ENCODE measurements at regions of chr1 and their contacts with region 1.

Region 1: DNA sequence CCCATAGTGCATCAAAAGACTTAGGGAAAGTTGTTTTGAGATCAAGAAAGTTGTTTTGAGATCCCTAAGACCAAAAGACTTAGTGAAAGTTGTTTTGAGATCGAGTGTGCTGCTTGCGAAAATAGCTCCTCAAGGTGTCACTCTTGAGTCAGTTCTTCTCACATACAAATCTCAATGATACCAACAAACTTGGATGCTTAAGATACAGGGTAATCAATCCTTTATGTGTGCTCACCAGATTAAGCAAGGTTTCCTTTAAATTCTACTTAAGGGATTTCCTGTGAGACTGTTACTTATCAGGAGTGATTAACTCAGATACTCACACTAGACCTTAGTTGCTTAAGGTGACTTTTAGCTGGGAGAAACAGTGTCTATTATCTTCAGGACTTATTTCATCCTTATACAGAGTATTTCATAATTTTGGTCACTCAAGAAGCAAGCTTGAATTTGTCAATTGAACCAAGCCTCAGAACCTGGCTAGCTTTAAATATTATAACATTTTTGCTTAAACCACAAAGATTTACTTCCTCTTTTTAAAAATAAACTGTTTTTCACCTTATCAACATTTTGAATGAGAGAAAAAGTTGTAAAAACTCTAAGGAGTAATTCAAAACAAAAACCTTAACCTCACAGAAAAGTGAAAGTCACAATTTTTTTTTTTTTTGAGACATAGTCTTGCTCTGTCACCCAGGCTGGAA is 8.0 kb upstream of the RLF start:
- DNase-seq: peak; percentile 61
- H3K4me3 Mint-ChIP-seq: no peak overlapping the region
- H3K27ac Mint-ChIP-seq: no peak overlapping the region
- H3K4me1 Mint-ChIP-seq: peaks cover 8% of the 10 kb centered on the region
- H3K27me3 Mint-ChIP-seq: peaks cover 13% of the 10 kb centered on the region
- CTCF ChIP-seq: peak; percentile 57

Region 2: GRCh38 chr1:39917825-39918224 is 235.4 kb before region 1 on chr1:
- CTCF ChIA-PET with region 1: no interaction called
- POLR2A ChIA-PET with region 1: no interaction called
- intact Hi-C with region 1: no loop called
- DNase-seq: no peak
- H3K4me3 Mint-ChIP-seq: no peak overlapping the region
- H3K27ac Mint-ChIP-seq: no peak overlapping the region
- H3K4me1 Mint-ChIP-seq: no peaks in the 10 kb centered on the region
- H3K27me3 Mint-ChIP-seq: no peaks in the 10 kb centered on the region
- CTCF ChIP-seq: no peak

Region 3: GRCh38 chr1:40078512-40079333 is 74.5 kb before region 1 on chr1:
- CTCF ChIA-PET with region 1: interaction called, 10 read pairs
- POLR2A ChIA-PET with region 1: no interaction called
- intact Hi-C with region 1: loop called (anchors 10 kb)
- DNase-seq: peak; percentile 79
- H3K4me3 Mint-ChIP-seq: no peak overlapping the region
- H3K27ac Mint-ChIP-seq: no peak overlapping the region
- H3K4me1 Mint-ChIP-seq: peaks cover 13% of the 10 kb centered on the region
- H3K27me3 Mint-ChIP-seq: no peaks in the 10 kb centered on the region
- CTCF ChIP-seq: peak; percentile 65

Region 4: DNA sequence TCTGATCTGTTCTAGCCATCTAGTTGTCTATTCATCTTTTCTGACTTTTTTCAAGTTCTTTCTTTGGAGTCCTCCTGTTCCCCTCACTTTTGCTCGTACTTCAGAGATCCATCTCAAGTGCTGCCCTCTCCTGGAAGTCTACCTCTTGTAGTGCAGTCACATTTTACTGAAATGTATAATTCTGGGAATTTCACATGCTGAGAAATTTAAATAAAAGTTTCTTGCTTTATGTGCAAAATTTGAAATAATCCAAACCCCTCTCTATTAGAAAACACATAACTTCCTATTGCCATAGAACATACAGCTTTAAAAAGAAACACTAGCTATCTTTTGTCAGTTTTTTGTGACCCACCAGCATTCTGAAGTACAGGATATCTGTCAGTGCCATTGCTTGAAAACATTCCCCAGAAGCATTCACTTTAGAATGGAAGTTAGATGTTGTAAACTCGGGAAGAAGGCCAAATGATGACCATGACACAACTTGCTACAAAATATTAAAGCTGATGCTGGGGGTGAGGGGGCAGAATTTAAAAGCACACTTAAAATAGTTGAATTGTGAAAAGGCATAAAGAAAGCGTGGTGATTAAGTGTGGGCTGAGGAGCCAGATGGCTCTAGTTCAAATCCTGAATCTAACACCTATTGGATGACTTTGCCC is 30.0 kb after region 1 on chr1:
- CTCF ChIA-PET with region 1: interaction called, 20 read pairs
- POLR2A ChIA-PET with region 1: no interaction called
- intact Hi-C with region 1: no loop called
- DNase-seq: peak; percentile 28
- H3K4me3 Mint-ChIP-seq: no peak overlapping the region
- H3K27ac Mint-ChIP-seq: no peak overlapping the region
- H3K4me1 Mint-ChIP-seq: peaks cover 37% of the 10 kb centered on the region
- H3K27me3 Mint-ChIP-seq: no peaks in the 10 kb centered on the region
- CTCF ChIP-seq: no peak

Region 5: GRCh38 chr1:40241362-40241761 is 88.1 kb after region 1 on chr1:
- CTCF ChIA-PET with region 1: interaction called, 14 read pairs
- POLR2A ChIA-PET with region 1: interaction called, 5 read pairs
- intact Hi-C with region 1: no loop called
- DNase-seq: no peak
- H3K4me3 Mint-ChIP-seq: no peak overlapping the region
- H3K27ac Mint-ChIP-seq: peak overlapping the region; percentile 13
- H3K4me1 Mint-ChIP-seq: peaks cover 13% of the 10 kb centered on the region
- H3K27me3 Mint-ChIP-seq: no peaks in the 10 kb centered on the region
- CTCF ChIP-seq: no peak

Region 6: GRCh38 chr1:40315239-40315794 is 162.1 kb after region 1 on chr1:
- CTCF ChIA-PET with region 1: interaction called, 16 read pairs
- POLR2A ChIA-PET with region 1: no interaction called
- intact Hi-C with region 1: loop called (anchors 5 kb)
- DNase-seq: peak; percentile 74
- H3K4me3 Mint-ChIP-seq: peak overlapping the region; percentile 17
- H3K27ac Mint-ChIP-seq: no peak overlapping the region
- H3K4me1 Mint-ChIP-seq: peaks cover 7% of the 10 kb centered on the region
- H3K27me3 Mint-ChIP-seq: peaks cover 34% of the 10 kb centered on the region
- CTCF ChIP-seq: peak; percentile 92

Region 7: GRCh38 chr1:40411294-40411693 is 258.1 kb after region 1 on chr1:
- CTCF ChIA-PET with region 1: interaction called, 14 read pairs
- POLR2A ChIA-PET with region 1: no interaction called
- intact Hi-C with region 1: no loop called
- DNase-seq: no peak
- H3K4me3 Mint-ChIP-seq: no peak overlapping the region
- H3K27ac Mint-ChIP-seq: no peak overlapping the region
- H3K4me1 Mint-ChIP-seq: peaks cover 6% of the 10 kb centered on the region
- H3K27me3 Mint-ChIP-seq: no peaks in the 10 kb centered on the region
- CTCF ChIP-seq: no peak